ENCODE measurements at regions of chr6 and their contacts with region 1.

Region 1: GRCh38 chr6:87701676-87702588 is at the start of gene AKIRIN2:
- DNase-seq: peak; percentile 97
- ATAC-seq: peak; percentile 94
- total RNA-seq, gene AKIRIN2: 36.1 TPM

Region 2: DNA sequence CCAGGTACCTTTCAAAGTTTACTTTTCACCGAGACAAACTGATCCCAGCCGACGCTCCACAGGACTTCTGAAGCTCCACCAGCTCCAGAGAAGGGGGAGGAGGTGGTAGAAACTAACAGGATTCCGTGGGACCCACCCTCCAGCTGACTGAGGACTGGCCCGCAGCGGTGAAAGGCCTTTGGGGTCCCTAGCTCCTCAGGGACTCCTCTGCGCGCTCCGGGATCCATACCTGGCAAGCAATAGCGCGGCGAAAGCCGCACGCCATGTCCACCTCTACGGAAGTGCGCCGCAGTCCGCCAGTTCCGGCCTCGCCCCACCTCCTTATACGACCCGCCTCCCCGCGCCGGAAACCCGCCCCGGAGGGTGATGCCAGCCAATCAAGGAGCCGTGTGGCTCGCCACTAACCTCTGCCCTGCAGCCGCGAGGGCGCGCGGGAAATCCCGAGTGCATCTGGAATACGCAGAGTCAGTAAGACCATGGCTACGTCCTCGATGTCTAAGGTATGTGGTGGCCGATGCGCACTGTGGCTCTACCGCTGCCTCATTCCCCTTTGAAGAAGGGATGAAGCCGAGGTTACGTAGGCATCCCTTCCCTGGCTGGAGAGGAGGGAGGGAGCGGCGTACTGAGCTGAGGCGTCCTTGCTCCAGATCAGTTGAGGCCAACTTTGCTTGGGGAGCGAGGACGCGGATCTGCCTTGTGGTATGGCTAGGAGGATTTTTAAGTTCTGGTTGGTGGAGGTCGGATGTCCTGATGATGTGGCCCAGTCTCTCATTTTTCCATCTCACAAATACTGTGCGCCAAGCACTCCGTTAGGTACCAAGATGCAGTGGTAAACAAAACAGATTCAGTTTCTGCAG is 112.0 kb before region 1 on chr6 and contains the starts of genes ORC3 and RARS2:
- intact Hi-C with region 1: loop called (anchors 5 kb)
- DNase-seq: peak; percentile 99
- ATAC-seq: peak; percentile 100
- total RNA-seq, gene ORC3: 18.9 TPM
- total RNA-seq, gene RARS2: 18.3 TPM

Region 3: GRCh38 chr6:87784690-87785089 is 82.8 kb after region 1 on chr6:
- intact Hi-C with region 1: no loop called
- DNase-seq: no peak
- ATAC-seq: no peak

Measured in Right ventricle myocardium inferior (tissue), 1 donor.